PC-9 (cell line): ENCODE measurements at regions of chr20 and their contacts with region 1.

Region 1: DNA sequence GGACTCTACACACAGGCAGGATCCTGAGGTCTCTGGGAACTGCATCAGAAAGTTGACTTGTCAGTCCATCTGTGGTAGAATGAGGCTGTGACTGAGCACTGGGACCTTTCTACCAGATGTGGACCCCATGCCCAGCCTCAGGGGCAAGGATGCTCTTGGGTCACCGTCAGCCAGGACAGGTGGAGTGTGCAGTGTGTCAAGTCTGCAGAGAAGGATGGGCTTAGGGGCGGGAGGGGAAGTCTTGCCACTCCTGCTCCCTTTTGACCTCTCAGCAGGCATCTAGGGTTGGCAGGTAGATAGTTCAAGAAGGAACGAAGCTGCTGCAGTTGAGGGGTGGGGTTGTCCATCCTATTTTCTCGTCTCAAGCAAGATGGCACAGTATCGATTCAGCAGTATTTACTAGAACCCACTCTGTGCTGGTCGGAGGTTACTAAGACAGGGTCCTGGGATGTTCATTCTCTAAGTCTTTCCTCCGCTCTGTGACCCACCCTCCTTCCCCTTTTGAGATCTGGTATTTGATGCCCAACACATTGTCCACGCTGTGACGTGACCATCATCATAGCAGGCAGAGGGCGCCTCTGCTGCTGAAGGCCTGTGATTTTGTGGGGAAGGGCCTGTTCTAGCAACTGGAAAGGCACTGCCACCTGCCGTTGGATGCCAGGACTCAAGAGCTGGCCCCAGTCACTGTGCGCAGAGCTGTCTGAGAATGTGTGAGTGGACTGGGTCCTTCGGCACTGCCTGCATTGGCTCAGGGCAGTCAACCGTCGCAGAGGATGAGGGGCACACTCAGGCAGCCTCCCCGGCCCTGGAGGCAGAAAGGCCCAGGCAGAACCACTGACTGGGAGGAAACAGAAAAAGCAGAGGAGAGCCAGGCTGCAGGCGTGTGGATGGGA is 23.2 kb downstream of the RBCK1 start:
- DNase-seq: peak; percentile 67 to 75
- H3K4me3 ChIP-seq: no peak overlapping the region
- H3K27ac ChIP-seq: no peak overlapping the region
- H3K4me1 ChIP-seq: no peaks in the 10 kb centered on the region
- H3K27me3 ChIP-seq: no peaks in the 10 kb centered on the region
- CTCF ChIP-seq: peak; percentile 80

Region 2: GRCh38 chr20:297098-297924 is 133.9 kb before region 1 on chr20 and contains the start of gene ZCCHC3:
- CTCF ChIA-PET with region 1: interaction called, 12 read pairs
- POLR2A ChIA-PET with region 1: no interaction called
- intact Hi-C with region 1: no loop called
- DNase-seq: peak; percentile 86 to 91
- H3K4me3 ChIP-seq: peak within 1 kb of the TSS; percentile 82
- H3K27ac ChIP-seq: peak within 1 kb of the TSS; percentile 81
- H3K4me1 ChIP-seq: peaks cover 27% of the 10 kb centered on the region
- H3K27me3 ChIP-seq: no peaks in the 10 kb centered on the region
- CTCF ChIP-seq: no peak
- total RNA-seq, gene ZCCHC3: 16.0 and 17.7 TPM in 2 replicates

Region 3: DNA sequence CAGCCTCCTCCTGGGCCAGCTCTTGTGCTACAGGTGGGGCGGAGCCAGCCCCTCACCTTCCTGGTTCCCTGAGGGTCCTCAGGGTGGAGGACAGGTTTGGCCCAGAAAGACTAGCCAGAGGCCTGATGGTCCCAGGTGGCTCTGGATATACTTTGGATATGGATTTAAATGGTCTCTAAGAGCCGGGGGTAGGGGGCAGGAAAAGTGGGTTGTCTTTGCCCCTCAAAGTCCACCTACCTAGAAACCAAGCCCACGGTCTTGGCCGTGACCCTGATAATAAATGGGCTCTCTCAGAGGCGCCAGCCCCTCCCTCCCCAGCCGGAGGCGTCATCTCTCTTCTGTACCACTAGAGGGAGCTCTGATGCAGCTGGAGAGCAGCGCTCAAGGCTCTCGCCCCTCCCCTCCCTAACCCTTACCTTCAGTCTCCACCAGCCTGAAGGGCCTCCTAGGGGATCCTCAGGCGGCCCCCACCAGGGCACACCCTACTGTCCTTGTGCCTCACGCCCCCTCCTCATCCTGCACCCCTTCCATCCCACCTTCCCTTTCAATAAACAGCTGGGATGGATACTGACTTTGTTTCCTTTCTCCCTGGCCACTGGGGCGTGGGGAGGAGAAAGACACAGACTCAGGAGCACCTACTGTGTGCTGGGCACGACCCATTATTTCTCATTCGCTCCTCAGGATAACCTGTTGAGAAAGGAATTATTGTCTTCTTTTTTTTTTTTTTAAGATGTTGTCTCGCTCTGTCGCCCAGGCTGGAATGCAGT is 76.8 kb before region 1 on chr20:
- CTCF ChIA-PET with region 1: interaction called, 19 read pairs
- POLR2A ChIA-PET with region 1: interaction called, 5 read pairs
- intact Hi-C with region 1: loop called (anchors 1 kb)
- DNase-seq: peak; percentile 59 to 80
- H3K4me3 ChIP-seq: no peak overlapping the region
- H3K27ac ChIP-seq: no peak overlapping the region
- H3K4me1 ChIP-seq: no peaks in the 10 kb centered on the region
- H3K27me3 ChIP-seq: no peaks in the 10 kb centered on the region
- CTCF ChIP-seq: peak; percentile 96

Region 4: DNA sequence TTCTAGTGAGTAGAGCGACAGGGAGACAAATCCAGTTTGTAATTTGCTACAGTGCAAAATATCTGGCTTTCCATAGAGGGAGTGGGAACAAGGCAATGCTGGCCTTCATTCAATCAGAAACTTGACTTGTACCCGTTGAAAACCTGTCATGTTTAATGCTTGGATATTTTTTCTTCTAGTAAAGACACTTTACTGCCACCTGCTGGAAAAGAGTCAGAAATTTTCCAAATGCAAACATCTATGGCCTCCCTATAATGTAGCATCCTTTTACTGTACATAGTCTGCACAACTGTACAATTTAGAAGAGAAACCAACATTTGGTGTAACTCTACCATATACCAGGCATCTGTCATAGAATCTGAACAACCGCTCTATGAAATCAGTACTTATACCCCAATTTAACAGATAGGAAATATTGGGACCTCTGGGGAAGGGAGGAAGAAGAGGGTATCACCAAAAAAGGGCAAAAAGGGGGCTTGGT is 47.7 kb after region 1 on chr20:
- CTCF ChIA-PET with region 1: interaction called, 11 read pairs
- POLR2A ChIA-PET with region 1: no interaction called
- intact Hi-C with region 1: loop called (anchors 1 kb)
- DNase-seq: peak in 1 of 2 experiments; percentile 21
- H3K4me3 ChIP-seq: no peak overlapping the region
- H3K27ac ChIP-seq: no peak overlapping the region
- H3K4me1 ChIP-seq: no peaks in the 10 kb centered on the region
- H3K27me3 ChIP-seq: no peaks in the 10 kb centered on the region
- CTCF ChIP-seq: peak; percentile 79